ENCODE measurements at regions of chr2 and their contacts with region 1.

Region 1: GRCh38 chr2:84495539-84496146 is 20.7 kb upstream of the DNAH6 start:
- DNase-seq: peak; percentile 81
- H3K4me3 ChIP-seq: no peak overlapping the region
- H3K27ac ChIP-seq: no peak overlapping the region
- H3K4me1 ChIP-seq: peaks cover 23% of the 10 kb centered on the region
- H3K27me3 ChIP-seq: no peaks in the 10 kb centered on the region

Region 2: GRCh38 chr2:84450288-84451227 is 45.1 kb before region 1 on chr2:
- in situ Hi-C with region 1: no loop called
- DNase-seq: no peak
- H3K4me3 ChIP-seq: no peak overlapping the region
- H3K27ac ChIP-seq: no peak overlapping the region
- H3K4me1 ChIP-seq: no peaks in the 10 kb centered on the region
- H3K27me3 ChIP-seq: no peaks in the 10 kb centered on the region

Region 3: DNA sequence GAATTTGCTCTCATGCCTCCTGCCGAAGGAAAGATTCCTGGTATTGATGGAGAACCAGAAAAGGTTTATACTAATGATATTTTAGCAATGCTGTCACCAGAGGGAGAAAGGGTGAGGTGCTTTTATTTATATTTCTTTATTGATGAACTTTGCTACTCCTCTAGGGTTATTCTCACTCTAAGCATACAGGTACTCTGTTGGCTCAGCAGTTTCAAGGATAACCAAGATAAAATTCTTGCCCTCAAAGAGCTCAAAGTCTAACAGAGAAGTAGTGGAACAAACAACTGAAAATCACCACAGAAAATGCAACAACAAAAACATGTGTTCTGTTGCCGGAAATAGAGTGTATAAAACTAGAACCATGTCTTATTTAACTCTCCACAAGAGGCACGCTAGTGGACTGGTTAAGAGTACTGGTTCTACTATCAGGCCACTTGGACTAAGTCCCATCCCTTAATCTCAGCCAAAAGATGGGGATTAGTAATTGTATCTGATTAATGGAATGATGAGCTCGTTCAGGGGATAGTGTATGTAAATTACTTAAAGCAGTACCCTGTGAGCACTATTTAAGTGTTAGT is 124.2 kb after region 1 on chr2:
- in situ Hi-C with region 1: loop called (anchors 10 kb)
- DNase-seq: no peak
- H3K4me3 ChIP-seq: no peak overlapping the region
- H3K27ac ChIP-seq: no peak overlapping the region
- H3K4me1 ChIP-seq: no peaks in the 10 kb centered on the region
- H3K27me3 ChIP-seq: no peaks in the 10 kb centered on the region; the same call in 1 of the 2 replicates

Region 4: DNA sequence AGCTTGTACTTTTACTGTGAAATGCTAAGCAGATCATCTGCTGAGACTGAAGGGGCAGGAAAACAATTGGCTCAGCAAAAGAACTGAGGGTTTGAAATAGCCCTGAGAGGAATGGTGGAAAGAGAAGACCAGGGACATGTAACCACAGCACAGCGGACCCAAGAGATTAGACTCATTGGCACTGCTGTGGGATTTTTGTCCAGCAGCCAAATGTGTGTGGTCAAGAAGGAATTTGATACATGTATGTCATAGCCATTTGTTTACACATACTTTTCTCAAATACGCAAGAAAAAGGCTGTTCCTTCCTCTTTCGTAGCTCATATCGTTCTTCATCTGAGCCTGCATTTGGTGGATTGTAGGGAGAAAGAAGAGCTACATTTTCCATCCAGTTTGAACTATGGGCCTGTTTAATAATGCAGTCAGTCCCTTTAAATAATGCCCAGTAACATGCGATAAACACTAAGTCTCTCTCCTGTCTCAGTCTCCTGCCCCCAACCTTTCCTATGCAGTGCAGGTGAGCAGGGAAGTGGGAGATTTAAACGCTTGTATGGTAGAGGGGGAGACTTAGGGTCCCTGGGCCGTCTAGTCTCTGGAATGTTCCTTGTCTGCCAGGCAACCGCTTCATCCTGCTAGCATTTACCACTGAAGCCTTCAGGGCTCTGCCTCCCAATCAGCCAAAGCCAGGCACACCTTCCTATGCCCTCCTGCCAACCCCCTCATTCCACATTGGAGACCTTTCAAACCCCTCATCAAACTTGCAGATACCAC is 311.6 kb after region 1 on chr2:
- in situ Hi-C with region 1: no loop called
- DNase-seq: peak; percentile 93
- H3K4me3 ChIP-seq: peak overlapping the region; percentile 48
- H3K27ac ChIP-seq: peak overlapping the region; percentile 83
- H3K4me1 ChIP-seq: peaks cover 39% of the 10 kb centered on the region
- H3K27me3 ChIP-seq: no peaks in the 10 kb centered on the region

Region 5: DNA sequence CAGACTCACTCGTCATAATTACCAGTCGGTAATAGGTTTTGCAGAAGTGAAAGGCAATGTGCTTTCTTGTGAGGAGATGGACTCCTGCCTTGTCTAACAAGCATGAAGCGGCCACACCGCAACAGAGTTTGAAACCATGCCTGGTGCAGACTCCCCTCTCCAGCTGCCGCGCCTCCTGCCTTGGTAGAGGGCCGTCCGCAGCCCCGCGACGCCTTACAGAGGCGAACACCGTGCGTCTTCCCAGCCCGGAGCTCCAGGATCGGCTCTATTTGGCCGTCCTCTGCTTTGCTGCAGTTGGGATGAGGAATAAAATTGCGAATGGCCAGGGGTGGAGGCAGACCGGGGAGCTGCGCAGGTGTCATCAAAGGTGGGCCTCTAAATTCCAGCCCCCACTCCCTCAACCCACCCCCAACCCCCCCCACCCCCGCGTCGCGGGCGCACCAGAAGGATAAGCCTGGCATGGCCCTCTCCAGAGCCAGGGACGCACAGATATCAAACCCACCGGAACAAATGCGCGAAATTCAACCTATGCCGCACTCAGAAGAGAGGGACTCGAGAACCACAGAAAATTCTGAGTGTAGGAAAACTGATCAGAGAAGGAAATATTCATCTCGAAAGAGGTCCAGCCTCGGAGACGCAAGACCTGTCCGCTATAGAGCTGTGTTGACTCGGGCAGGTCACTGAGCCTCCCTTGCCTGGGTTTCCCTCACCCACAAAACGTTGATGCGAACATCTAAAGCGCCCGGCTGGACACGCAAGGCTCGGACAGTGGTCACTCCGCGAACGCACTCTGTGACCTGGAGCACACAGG is 384.1 kb after region 1 on chr2:
- in situ Hi-C with region 1: loop called (anchors 10 kb)
- DNase-seq: peak; percentile 27
- H3K4me3 ChIP-seq: peak overlapping the region; percentile 79
- H3K27ac ChIP-seq: no peak overlapping the region
- H3K4me1 ChIP-seq: 0 out of 2 replicates have a peak, but pooled peaks cover 4% of the 10 kb centered on the region
- H3K27me3 ChIP-seq: no peaks in the 10 kb centered on the region

Region 6: GRCh38 chr2:85277416-85278158 is 781.9 kb after region 1 on chr2:
- in situ Hi-C with region 1: loop called (anchors 25 kb)
- DNase-seq: peak; percentile 88
- H3K4me3 ChIP-seq: peak overlapping the region; percentile 73
- H3K27ac ChIP-seq: peak overlapping the region; percentile 62
- H3K4me1 ChIP-seq: peaks cover 41% of the 10 kb centered on the region
- H3K27me3 ChIP-seq: no peaks in the 10 kb centered on the region

Measured in GM23248 (cell line).